Activated CD4-positive, alpha-beta T cell treated with anti-CD3 and anti-CD28 coated beads for 36 hours (primary cell): ENCODE measurements at regions of chr4 and their contacts with region 1.

Region 1: GRCh38 chr4:107719922-107720722 is at the start of gene PAPSS1:
- DNase-seq: peak; percentile 97
- ATAC-seq: peak; percentile 93
- H3K4me3 Mint-ChIP-seq: peak within 1 kb of the TSS; percentile 94
- H3K27ac Mint-ChIP-seq: peak within 1 kb of the TSS; percentile 94
- H3K4me1 Mint-ChIP-seq: peaks cover 28% of the 10 kb centered on the region
- H3K27me3 Mint-ChIP-seq: no peaks in the 10 kb centered on the region
- total RNA-seq, gene PAPSS1: 31.0 to 37.6 TPM

Region 2: GRCh38 chr4:106315968-106316772 is 1404.0 kb before region 1 on chr4 and contains the starts of genes AIMP1 and TBCK:
- CTCF ChIA-PET with region 1: no interaction called
- POLR2A ChIA-PET with region 1: no interaction called
- intact Hi-C with region 1: loop called (anchors 1 to 5 kb)
- DNase-seq: peak; percentile 91
- ATAC-seq: peak; percentile 83
- H3K4me3 Mint-ChIP-seq: no peak within 1 kb of the TSS
- H3K27ac Mint-ChIP-seq: no peak within 1 kb of the TSS
- H3K4me1 Mint-ChIP-seq: peaks cover 49% of the 10 kb centered on the region
- H3K27me3 Mint-ChIP-seq: no peaks in the 10 kb centered on the region
- total RNA-seq, gene AIMP1: 41.9 to 69.5 TPM
- total RNA-seq, gene TBCK: 22.5 to 25.1 TPM

Region 3: GRCh38 chr4:107552306-107552705 is 167.8 kb before region 1 on chr4:
- CTCF ChIA-PET with region 1: no interaction called
- POLR2A ChIA-PET with region 1: no interaction called
- intact Hi-C with region 1: loop called in 1 of 2 experiments (anchors 10 kb)
- DNase-seq: no peak
- ATAC-seq: no peak
- H3K4me3 Mint-ChIP-seq: no peak overlapping the region
- H3K27ac Mint-ChIP-seq: no peak overlapping the region
- H3K4me1 Mint-ChIP-seq: no peaks in the 10 kb centered on the region
- H3K27me3 Mint-ChIP-seq: no peaks in the 10 kb centered on the region

Region 4: GRCh38 chr4:107619066-107619465 is 101.1 kb before region 1 on chr4:
- CTCF ChIA-PET with region 1: no interaction called
- POLR2A ChIA-PET with region 1: no interaction called
- intact Hi-C with region 1: no loop called
- DNase-seq: no peak
- ATAC-seq: no peak
- H3K4me3 Mint-ChIP-seq: no peak overlapping the region
- H3K27ac Mint-ChIP-seq: no peak overlapping the region
- H3K4me1 Mint-ChIP-seq: no peaks in the 10 kb centered on the region
- H3K27me3 Mint-ChIP-seq: no peaks in the 10 kb centered on the region

Region 5: GRCh38 chr4:107689912-107690565 is 30.1 kb before region 1 on chr4:
- CTCF ChIA-PET with region 1: no interaction called
- POLR2A ChIA-PET with region 1: no interaction called
- intact Hi-C with region 1: loop called in 1 of 2 experiments (anchors 2 kb)
- DNase-seq: no peak
- ATAC-seq: peak; percentile 99
- H3K4me3 Mint-ChIP-seq: no peak overlapping the region
- H3K27ac Mint-ChIP-seq: no peak overlapping the region
- H3K4me1 Mint-ChIP-seq: peaks cover 6% of the 10 kb centered on the region
- H3K27me3 Mint-ChIP-seq: no peaks in the 10 kb centered on the region

Region 6: DNA sequence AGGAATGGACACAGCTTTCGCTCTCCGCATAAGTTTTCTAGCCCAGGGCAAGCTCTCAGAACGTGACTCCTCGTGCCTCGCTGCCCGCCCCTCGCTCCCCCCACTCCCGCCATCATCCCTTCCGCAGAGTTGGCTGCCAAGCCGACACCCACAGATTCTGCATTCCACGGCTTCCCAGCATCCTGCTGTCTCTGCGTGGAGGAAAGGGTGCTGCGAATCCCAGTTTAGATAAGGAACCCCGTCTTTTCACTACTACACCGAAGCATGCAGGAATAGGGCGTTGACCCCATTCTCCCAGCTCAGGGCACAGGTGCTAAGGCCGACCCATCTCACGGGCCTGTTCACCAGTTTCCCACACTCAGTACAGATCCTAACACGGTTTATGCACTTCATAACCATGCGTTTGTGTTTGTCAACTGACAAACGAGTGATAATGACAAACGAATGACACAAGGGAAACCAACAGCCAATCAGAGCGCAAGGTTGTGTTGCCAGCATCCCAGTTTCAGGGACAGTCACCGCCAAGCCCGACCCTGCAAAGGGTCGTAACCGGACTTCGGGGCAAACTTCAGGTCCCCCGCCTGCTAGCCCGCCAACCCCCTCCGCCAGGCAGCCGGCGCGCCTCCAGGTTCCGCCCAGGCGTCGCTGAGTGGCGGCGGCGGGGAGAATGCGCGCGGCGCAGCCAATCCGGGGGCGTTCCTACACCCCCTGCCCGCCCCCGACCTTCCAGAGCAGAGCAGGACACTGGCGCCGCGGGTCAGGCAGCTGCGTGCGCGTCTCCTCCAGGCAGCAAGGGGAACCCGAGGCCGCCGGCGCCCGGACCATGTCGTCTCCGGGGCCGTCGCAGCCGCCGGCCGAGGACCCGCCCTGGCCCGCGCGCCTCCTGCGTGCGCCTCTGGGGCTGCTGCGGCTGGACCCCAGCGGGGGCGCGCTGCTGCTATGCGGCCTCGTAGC is 211.0 kb after region 1 on chr4 and contains the start of gene CYP2U1:
- CTCF ChIA-PET with region 1: no interaction called
- POLR2A ChIA-PET with region 1: no interaction called
- intact Hi-C with region 1: loop called (anchors 1 kb)
- DNase-seq: peak; percentile 82
- ATAC-seq: peak; percentile 89
- H3K4me3 Mint-ChIP-seq: peak within 1 kb of the TSS; percentile 71
- H3K27ac Mint-ChIP-seq: peak within 1 kb of the TSS; percentile 85
- H3K4me1 Mint-ChIP-seq: peaks cover 27% of the 10 kb centered on the region
- H3K27me3 Mint-ChIP-seq: no peaks in the 10 kb centered on the region
- total RNA-seq, gene CYP2U1: 2.3 to 2.4 TPM

Region 7: GRCh38 chr4:108172753-108173598 is 452.9 kb after region 1 on chr4:
- CTCF ChIA-PET with region 1: no interaction called
- POLR2A ChIA-PET with region 1: no interaction called
- intact Hi-C with region 1: loop called in 1 of 2 experiments (anchors 2 kb)
- DNase-seq: peak; percentile 84
- ATAC-seq: peak; percentile 42
- H3K4me3 Mint-ChIP-seq: peak overlapping the region; percentile 85
- H3K27ac Mint-ChIP-seq: peak overlapping the region; percentile 95
- H3K4me1 Mint-ChIP-seq: peaks cover 53% of the 10 kb centered on the region
- H3K27me3 Mint-ChIP-seq: peaks cover 12% of the 10 kb centered on the region

Region 8: DNA sequence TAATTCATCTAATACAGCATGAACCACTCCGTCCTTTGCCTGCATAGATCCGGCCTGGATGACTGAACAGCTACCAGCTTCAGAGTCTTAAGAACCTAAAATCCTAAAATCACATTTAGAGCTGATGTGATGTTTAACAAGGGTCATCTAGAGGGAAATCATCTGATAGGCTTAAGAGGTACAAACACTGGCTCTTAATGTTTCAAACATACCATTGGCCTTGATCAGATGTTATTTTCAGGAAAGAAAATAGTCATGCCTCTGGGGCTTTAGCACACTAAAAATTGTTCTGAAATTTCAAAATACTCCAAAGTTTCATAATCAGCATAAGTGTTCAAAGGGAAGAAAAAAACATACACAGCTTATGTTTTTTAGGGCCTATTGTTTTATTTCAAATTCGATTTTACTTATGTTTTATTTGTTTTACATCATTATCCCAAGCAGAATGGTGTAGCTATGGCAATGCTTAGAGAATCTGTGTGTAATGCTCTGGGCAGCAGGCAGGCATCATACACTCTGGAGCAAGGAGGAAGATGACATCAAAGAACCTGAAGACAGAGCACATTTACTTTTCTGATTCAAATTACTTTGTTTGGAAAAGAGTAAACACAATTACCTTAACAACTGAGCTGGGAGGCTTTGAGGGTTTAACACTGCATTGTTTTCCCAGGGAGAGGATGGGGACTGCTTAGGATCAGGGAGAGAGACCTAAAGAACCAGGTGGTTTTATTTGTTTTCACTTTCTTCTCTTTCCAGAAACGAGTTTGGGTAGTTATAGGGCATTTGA is 474.0 kb after region 1 on chr4:
- CTCF ChIA-PET with region 1: no interaction called
- POLR2A ChIA-PET with region 1: no interaction called
- intact Hi-C with region 1: no loop called
- DNase-seq: no peak
- ATAC-seq: no peak
- H3K4me3 Mint-ChIP-seq: no peak overlapping the region
- H3K27ac Mint-ChIP-seq: no peak overlapping the region
- H3K4me1 Mint-ChIP-seq: peaks cover 18% of the 10 kb centered on the region
- H3K27me3 Mint-ChIP-seq: no peaks in the 10 kb centered on the region

Region 9: GRCh38 chr4:108650212-108651013 is 930.3 kb after region 1 on chr4 and contains the start of gene OSTC:
- CTCF ChIA-PET with region 1: no interaction called
- POLR2A ChIA-PET with region 1: no interaction called
- intact Hi-C with region 1: loop called in 1 of 2 experiments (anchors 1 kb)
- DNase-seq: peak; percentile 95
- ATAC-seq: peak; percentile 96
- H3K4me3 Mint-ChIP-seq: peak within 1 kb of the TSS; percentile 98
- H3K27ac Mint-ChIP-seq: peak within 1 kb of the TSS; percentile 93
- H3K4me1 Mint-ChIP-seq: peaks cover 32% of the 10 kb centered on the region
- H3K27me3 Mint-ChIP-seq: no peaks in the 10 kb centered on the region
- total RNA-seq, gene OSTC: 50.5 to 78.5 TPM